Colonic mucosa (tissue), 4 donors: ENCODE measurements at regions of chr16 and their contacts with region 1.

Region 1: GRCh38 chr16:27906883-27907282 is 156.6 kb downstream of the GSG1L start:
- DNase-seq: no peak
- H3K4me3 ChIP-seq: no peak overlapping the region
- H3K27ac ChIP-seq: no peak overlapping the region
- H3K4me1 ChIP-seq: no peaks in the 10 kb centered on the region
- H3K27me3 ChIP-seq: no peaks in the 10 kb centered on the region
- CTCF ChIP-seq: no peak

Region 2: DNA sequence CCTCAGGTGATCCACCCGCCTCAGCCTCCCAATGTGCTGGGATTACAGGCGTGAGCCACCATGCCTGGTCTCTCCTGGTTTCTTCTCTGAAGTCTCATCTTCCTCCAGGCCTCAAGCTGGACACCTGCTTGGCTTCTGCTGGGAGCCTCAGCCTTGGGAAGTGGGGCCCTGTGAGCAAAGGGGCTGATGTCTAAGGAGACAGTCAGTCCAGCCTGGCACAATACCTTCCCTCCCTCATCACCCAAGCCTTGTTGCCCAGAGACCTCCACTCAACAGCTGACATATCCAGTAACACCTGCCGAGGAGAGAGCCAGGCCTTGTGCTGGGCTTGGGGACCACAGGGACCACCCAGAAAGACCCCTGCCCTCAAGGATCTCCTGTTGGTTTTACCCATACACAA is 95.0 kb before region 1 on chr16:
- intact Hi-C with region 1: no loop called
- DNase-seq: no peak
- H3K4me3 ChIP-seq: no peak overlapping the region
- H3K27ac ChIP-seq: no peak overlapping the region
- H3K4me1 ChIP-seq: no peaks in the 10 kb centered on the region
- H3K27me3 ChIP-seq: no peaks in the 10 kb centered on the region
- CTCF ChIP-seq: no peak

Region 3: GRCh38 chr16:27951489-27952120 is 44.7 kb after region 1 on chr16:
- intact Hi-C with region 1: loop called (anchors 10 kb)
- DNase-seq: no peak
- H3K4me3 ChIP-seq: no peak overlapping the region
- H3K27ac ChIP-seq: no peak overlapping the region
- H3K4me1 ChIP-seq: no peaks in the 10 kb centered on the region
- H3K27me3 ChIP-seq: no peaks in the 10 kb centered on the region
- CTCF ChIP-seq: no peak